Activated naive CD4-positive, alpha-beta T cell treated with anti-CD3 and anti-CD28 coated beads, Interleukin-2, amount 10 ng/mL, durations not matched to agents 7 days and 5 days (primary cell): ENCODE measurements at regions of chr17 and their contacts with region 1.

Region 1: GRCh38 chr17:74770498-74771318 is 5.4 kb downstream of the NAT9 start:
- DNase-seq: peak; percentile 83
- H3K4me3 Mint-ChIP-seq: no peak overlapping the region
- H3K27ac Mint-ChIP-seq: peak overlapping the region; percentile 80
- H3K4me1 Mint-ChIP-seq: peaks cover 47% of the 10 kb centered on the region
- H3K27me3 Mint-ChIP-seq: no peaks in the 10 kb centered on the region

Region 2: DNA sequence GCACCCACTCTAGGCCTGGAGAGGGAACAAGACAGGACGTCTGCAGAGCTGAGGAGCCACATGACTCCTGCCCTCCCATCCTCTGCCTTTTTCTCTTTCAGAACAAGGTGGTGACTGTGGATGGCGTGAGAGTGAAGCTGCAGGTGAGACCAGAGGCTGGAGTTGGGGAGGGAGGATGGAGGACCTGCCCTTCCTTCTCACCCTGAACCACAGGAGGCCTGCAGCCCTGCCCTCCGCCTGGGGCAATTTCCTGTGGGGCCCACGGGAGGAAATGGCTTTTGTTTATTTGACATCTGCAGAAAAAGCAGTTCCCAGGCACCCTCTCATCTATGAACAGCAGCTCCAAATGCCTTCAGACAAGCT is 28.6 kb before region 1 on chr17:
- CTCF ChIA-PET with region 1: interaction called, 56 read pairs
- DNase-seq: peak; percentile 85
- H3K4me3 Mint-ChIP-seq: peak overlapping the region; percentile 68
- H3K27ac Mint-ChIP-seq: peak overlapping the region; percentile 98
- H3K4me1 Mint-ChIP-seq: peaks cover 92% of the 10 kb centered on the region
- H3K27me3 Mint-ChIP-seq: no peaks in the 10 kb centered on the region

Region 3: DNA sequence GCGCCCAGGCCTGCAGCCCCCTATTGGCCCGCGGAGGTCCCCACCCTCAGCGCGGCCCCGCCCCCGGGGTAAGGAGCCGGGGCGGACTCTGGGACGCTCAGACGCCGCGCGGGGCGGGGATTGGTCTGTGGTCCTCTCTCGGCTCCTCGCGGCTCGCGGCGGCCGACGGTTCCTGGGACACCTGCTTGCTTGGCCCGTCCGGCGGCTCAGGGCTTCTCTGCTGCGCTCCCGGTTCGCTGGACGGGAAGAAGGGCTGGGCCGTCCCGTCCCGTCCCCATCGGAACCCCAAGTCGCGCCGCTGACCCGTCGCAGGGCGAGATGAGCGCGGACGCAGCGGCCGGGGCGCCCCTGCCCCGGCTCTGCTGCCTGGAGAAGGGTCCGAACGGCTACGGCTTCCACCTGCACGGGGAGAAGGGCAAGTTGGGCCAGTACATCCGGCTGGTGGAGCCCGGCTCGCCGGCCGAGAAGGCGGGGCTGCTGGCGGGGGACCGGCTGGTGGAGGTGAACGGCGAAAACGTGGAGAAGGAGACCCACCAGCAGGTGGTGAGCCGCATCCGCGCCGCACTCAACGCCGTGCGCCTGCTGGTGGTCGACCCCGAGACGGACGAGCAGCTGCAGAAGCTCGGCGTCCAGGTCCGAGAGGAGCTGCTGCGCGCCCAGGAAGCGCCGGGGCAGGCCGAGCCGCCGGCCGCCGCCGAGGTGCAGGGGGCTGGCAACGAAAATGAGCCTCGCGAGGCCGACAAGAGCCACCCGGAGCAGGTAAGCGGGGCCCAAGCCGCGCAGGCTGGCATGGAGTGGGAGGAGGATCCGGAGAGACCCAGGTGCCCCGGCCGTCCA is 22.0 kb before region 1 on chr17 and contains the start of gene NHERF1:
- CTCF ChIA-PET with region 1: interaction called, 56 read pairs
- DNase-seq: peak; percentile 95
- H3K4me3 Mint-ChIP-seq: peak within 1 kb of the TSS; percentile 99
- H3K27ac Mint-ChIP-seq: peak within 1 kb of the TSS; percentile 88
- H3K4me1 Mint-ChIP-seq: peaks cover 64% of the 10 kb centered on the region
- H3K27me3 Mint-ChIP-seq: no peaks in the 10 kb centered on the region